ENCODE measurements at regions of chr1 and their contacts with region 1.

Region 1: GRCh38 chr1:164602480-164603093 is 43.6 kb downstream of the PBX1 start:
- DNase-seq: peak; percentile 65 to 83
- H3K4me3 ChIP-seq: peak overlapping the region; percentile 49
- H3K27ac ChIP-seq: peak overlapping the region; percentile 95
- H3K4me1 ChIP-seq: peaks cover 69% of the 10 kb centered on the region
- H3K27me3 ChIP-seq: no peaks in the 10 kb centered on the region
- CTCF ChIP-seq: no peak

Region 2: DNA sequence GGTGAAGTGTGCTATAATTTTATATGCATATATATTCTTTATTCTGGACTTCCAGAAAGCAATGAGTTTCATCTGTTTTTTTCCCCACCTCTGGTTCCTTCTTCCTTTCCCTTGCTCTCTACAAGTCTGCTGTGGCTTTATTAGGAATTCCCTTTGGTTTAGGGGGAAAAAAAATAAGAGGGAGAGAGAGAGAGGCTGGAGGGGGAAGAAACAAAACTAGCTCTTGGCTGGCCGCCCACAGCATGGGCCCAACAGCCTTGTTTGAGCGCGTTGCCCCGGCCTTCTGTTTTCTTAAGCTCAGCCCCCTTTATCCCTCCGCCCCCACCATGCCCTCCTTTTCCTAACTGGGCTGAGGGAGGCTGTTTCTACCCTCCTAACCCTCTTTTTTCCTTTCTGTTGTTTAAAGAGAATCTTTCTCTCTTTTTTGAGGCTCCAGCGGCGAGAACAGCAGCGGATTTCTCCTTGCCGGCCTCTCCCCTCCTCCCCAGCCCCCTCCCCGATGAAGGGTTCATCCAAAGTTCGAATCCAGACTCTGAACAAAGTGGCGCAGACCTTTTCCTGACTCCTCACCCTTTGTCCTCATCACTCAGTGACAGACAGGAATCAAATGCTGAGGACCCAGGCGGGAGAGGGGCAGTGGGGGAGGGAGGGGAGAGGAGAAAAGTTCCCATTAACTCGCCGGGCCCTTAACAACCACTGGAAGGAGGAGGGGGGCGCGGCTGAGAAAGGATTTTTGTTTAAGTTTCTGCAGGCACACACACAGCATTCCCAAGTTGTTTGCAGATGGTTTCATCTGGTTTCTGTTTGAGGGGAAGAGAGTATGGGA is 13.9 kb before region 1 on chr1:
- CTCF ChIA-PET with region 1: no interaction called
- POLR2A ChIA-PET with region 1: no interaction called
- intact Hi-C with region 1: loop called (anchors 1 kb)
- DNase-seq: no peak
- H3K4me3 ChIP-seq: no peak overlapping the region
- H3K27ac ChIP-seq: no peak overlapping the region
- H3K4me1 ChIP-seq: peaks cover 38% of the 10 kb centered on the region
- H3K27me3 ChIP-seq: no peaks in the 10 kb centered on the region
- CTCF ChIP-seq: no peak

Region 3: DNA sequence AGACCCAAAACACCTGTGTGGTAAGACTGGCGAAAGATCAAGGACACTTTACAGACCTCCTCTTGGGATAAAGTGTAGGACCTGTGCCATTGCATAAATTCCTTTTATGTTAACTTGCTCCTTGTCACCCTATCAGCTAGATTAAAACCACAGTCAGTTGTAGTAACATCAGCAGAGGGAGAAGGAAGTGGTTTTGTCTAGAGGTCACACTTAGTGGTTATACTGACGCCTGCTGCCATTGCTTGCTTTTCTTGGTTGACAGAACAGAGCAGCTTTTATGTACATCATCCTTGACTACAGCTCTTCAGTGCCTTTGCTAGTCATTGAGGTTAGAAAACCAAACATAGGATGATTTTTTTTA is 57.8 kb after region 1 on chr1:
- CTCF ChIA-PET with region 1: interaction called, 3 read pairs
- POLR2A ChIA-PET with region 1: no interaction called
- intact Hi-C with region 1: loop called (anchors 1 kb)
- DNase-seq: no peak
- H3K4me3 ChIP-seq: peak overlapping the region; percentile 39; the same call in 1 of the 2 replicates
- H3K27ac ChIP-seq: peak overlapping the region; percentile 99
- H3K4me1 ChIP-seq: peaks cover 81% of the 10 kb centered on the region
- H3K27me3 ChIP-seq: no peaks in the 10 kb centered on the region
- CTCF ChIP-seq: peak; percentile 33; the same call in 1 of the 2 replicates

Region 4: GRCh38 chr1:164707868-164708331 is 105.3 kb after region 1 on chr1:
- CTCF ChIA-PET with region 1: no interaction called
- POLR2A ChIA-PET with region 1: no interaction called
- intact Hi-C with region 1: loop called (anchors 2 kb)
- DNase-seq: peak; percentile 48 to 50
- H3K4me3 ChIP-seq: no peak overlapping the region
- H3K27ac ChIP-seq: peak overlapping the region; percentile 83
- H3K4me1 ChIP-seq: peaks cover 33% of the 10 kb centered on the region
- H3K27me3 ChIP-seq: no peaks in the 10 kb centered on the region
- CTCF ChIP-seq: no peak

Region 5: DNA sequence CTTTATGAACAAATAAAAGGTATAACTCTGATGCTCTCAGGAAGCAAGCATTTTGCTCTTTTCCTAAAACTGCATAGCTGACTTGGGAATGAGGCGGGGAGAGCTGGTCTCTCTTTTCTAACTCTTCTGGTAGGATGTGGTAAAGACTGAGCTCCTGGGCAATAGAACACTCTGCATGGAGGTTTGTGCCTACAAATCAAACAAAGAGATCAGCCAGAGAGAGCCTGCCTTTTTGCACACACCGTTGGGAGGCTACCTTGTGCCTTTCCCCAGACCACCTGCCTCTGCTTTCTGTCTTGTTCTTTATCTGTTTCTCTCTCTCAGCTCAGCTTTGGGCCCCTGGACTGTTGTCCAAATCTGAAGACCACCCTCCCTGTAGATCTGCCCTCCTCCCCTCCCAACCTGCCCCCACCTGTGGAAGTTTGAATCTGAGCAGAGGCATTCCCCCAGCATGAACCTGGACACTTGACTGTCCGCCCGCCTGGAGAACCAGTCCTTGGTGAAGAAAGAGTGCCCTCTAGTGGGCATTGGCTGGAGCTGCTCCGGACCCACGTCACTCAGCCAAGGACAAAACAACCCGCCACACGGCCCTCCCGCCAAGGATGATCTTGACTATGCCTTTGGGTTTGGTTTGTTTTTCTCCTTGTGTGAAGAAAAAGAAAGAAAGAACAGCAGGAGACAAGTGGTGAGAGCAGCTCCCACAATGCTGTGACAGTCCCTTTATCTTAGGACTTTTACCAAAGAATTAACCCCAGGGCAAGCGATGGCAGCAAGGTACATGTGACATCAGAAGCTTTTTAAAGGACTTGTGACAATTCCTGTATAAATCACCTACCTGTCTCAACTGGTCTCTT is 184.6 kb after region 1 on chr1:
- CTCF ChIA-PET with region 1: no interaction called
- POLR2A ChIA-PET with region 1: no interaction called
- intact Hi-C with region 1: loop called (anchors 1 kb)
- DNase-seq: peak; percentile 66 to 78
- H3K4me3 ChIP-seq: no peak overlapping the region
- H3K27ac ChIP-seq: peak overlapping the region; percentile 54
- H3K4me1 ChIP-seq: peaks cover 22% of the 10 kb centered on the region
- H3K27me3 ChIP-seq: no peaks in the 10 kb centered on the region
- CTCF ChIP-seq: peak; percentile 95